Left colon (tissue), 2 donors: ENCODE measurements at regions of chr1 and their contacts with region 1.

Region 1: GRCh38 chr1:150053926-150054325 is 13.7 kb upstream of the VPS45 start:
- DNase-seq: no peak
- ATAC-seq: no peak

Region 2: DNA sequence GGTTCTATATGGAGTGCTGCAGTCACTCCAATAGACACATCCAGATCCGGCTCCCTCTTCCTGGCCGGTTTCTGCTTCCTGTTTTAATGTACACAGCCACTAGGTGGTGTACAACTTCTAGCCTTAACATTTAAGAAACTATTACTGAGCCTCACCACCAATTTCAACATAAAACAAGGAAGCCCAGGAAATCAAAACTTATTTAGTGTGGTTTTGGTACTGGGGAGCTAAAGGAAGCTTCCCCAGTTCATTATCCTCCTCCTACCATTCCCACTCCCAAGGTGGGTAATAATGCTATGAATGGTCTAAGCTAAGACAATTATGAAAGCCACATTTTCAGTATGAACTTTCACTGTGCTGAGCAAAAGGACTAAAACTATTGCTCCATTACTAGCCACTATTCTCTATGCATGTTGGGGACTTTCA is 91.8 kb before region 1 on chr1:
- intact Hi-C with region 1: loop called in 1 of 2 experiments (anchors 2 kb)
- DNase-seq: peak in 1 of 2 donors; percentile 31
- ATAC-seq: peak; percentile 95

Region 3: GRCh38 chr1:150168960-150169601 is 115.2 kb after region 1 on chr1:
- intact Hi-C with region 1: loop called in 1 of 2 experiments (anchors 5 kb)
- DNase-seq: peak; percentile 56 to 76
- ATAC-seq: peak; percentile 47